Naive thymus-derived CD4-positive, alpha-beta T cell (primary cell): ENCODE measurements at regions of chr7 and their contacts with region 1.

Region 1: GRCh38 chr7:2477447-2478398 is 1.5 kb upstream of the GRIFIN start:
- DNase-seq: peak; percentile 30 to 75 (median 61)
- ATAC-seq: peak; percentile 94
- H3K4me3 ChIP-seq: no peak overlapping the region
- H3K4me3 Mint-ChIP-seq: peak overlapping the region in 1 of 10 donors; percentile 38
- H3K27ac ChIP-seq: no peak overlapping the region
- H3K27ac Mint-ChIP-seq: peak overlapping the region in 1 of 9 donors; percentile 33
- H3K4me1 ChIP-seq: peaks cover 7 to 13% of the 10 kb centered on the region in 2 donors
- H3K4me1 Mint-ChIP-seq: peaks cover 0 to 10% (median 0%) of the 10 kb centered on the region in 7 donors
- H3K27me3 ChIP-seq: no peaks in the 10 kb centered on the region
- H3K27me3 Mint-ChIP-seq: peaks cover 0 to 3% (median 0%) of the 10 kb centered on the region in 5 donors

Region 2: GRCh38 chr7:2519119-2519930 is 41.6 kb after region 1 on chr7 and contains the start of gene LFNG:
- CTCF ChIA-PET with region 1: interaction called, 4 read pairs
- POLR2A ChIA-PET with region 1: interaction called, 8 read pairs
- intact Hi-C with region 1: loop called (anchors 1 to 5 kb)
- DNase-seq: peak; percentile 64 to 93 (median 77)
- ATAC-seq: peak; percentile 89
- H3K4me3 ChIP-seq: peak within 1 kb of the TSS; percentile 94
- H3K4me3 Mint-ChIP-seq: peak within 1 kb of the TSS; percentile 94 to 99 (median 96)
- H3K27ac ChIP-seq: peak within 1 kb of the TSS; percentile 78
- H3K27ac Mint-ChIP-seq: peak within 1 kb of the TSS; percentile 80 to 92 (median 88)
- H3K4me1 ChIP-seq: peaks cover 20 to 25% of the 10 kb centered on the region in 2 donors
- H3K4me1 Mint-ChIP-seq: peaks cover 14 to 33% (median 30%) of the 10 kb centered on the region in 7 donors
- H3K27me3 ChIP-seq: no peaks in the 10 kb centered on the region
- H3K27me3 Mint-ChIP-seq: peaks cover 0 to 11% (median 0%) of the 10 kb centered on the region in 5 donors
- total RNA-seq, gene LFNG: 114 to 246 (median 151) TPM

Region 3: GRCh38 chr7:2567679-2568278 is 90.1 kb after region 1 on chr7:
- CTCF ChIA-PET with region 1: interaction called, 6 read pairs
- POLR2A ChIA-PET with region 1: no interaction called
- intact Hi-C with region 1: loop called in 1 of 2 experiments (anchors 1 kb)
- DNase-seq: peak in 4 of 9 donors; percentile 13 to 37 (median 20)
- ATAC-seq: peak; percentile 50
- H3K4me3 ChIP-seq: no peak overlapping the region
- H3K4me3 Mint-ChIP-seq: no peak overlapping the region
- H3K27ac ChIP-seq: no peak overlapping the region
- H3K27ac Mint-ChIP-seq: no peak overlapping the region
- H3K4me1 ChIP-seq: no peaks in the 10 kb centered on the region
- H3K4me1 Mint-ChIP-seq: peaks cover 3 to 15% (median 6%) of the 10 kb centered on the region in 7 donors
- H3K27me3 ChIP-seq: no peaks in the 10 kb centered on the region
- H3K27me3 Mint-ChIP-seq: no peaks in the 10 kb centered on the region